Activated B cell treated with CpG ODN at 0.5 μM for 24 hours (primary cell): ENCODE measurements at regions of chr10 and their contacts with region 1.

Region 1: DNA sequence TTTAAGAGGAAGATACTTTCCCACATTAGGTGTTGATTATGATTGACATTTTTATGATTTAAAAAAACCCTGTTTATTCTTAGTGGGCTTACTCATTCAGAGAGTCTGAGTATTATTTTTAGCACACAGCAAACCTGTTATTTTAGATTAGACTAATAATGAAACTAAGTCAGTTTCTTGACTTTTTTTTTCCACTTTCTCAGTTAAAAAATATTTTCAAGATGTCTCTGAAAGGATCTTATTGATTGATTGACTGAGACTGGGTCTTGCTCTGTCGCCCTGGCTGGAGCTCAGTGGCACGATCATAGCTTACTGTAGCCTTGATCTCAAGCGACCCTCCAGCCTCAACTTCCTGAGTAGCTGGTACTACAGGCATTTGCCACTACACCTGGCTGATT is 20.4 kb upstream of the INPP5F start:
- DNase-seq: peak; percentile 31
- ATAC-seq: peak; percentile 25
- H3K4me3 Mint-ChIP-seq: peak overlapping the region; percentile 59
- H3K27ac Mint-ChIP-seq: peak overlapping the region; percentile 97
- H3K4me1 Mint-ChIP-seq: peaks cover 95% of the 10 kb centered on the region
- H3K27me3 Mint-ChIP-seq: no peaks in the 10 kb centered on the region
- CTCF ChIP-seq: no peak

Region 2: GRCh38 chr10:119604468-119604867 is 101.0 kb before region 1 on chr10:
- CTCF ChIA-PET with region 1: no interaction called
- POLR2A ChIA-PET with region 1: no interaction called
- intact Hi-C with region 1: no loop called
- DNase-seq: no peak
- ATAC-seq: no peak
- H3K4me3 Mint-ChIP-seq: no peak overlapping the region
- H3K27ac Mint-ChIP-seq: no peak overlapping the region
- H3K4me1 Mint-ChIP-seq: peaks cover 3% of the 10 kb centered on the region
- H3K27me3 Mint-ChIP-seq: peaks cover 2% of the 10 kb centered on the region
- CTCF ChIP-seq: no peak

Region 3: GRCh38 chr10:119650692-119651513 is 54.5 kb before region 1 on chr10 and contains the start of gene BAG3:
- CTCF ChIA-PET with region 1: no interaction called
- POLR2A ChIA-PET with region 1: interaction called, 3 read pairs
- intact Hi-C with region 1: loop called (anchors 2 kb)
- DNase-seq: peak; percentile 73
- ATAC-seq: peak; percentile 93
- H3K4me3 Mint-ChIP-seq: peak within 1 kb of the TSS; percentile 97
- H3K27ac Mint-ChIP-seq: peak within 1 kb of the TSS; percentile 95
- H3K4me1 Mint-ChIP-seq: peaks cover 16% of the 10 kb centered on the region
- H3K27me3 Mint-ChIP-seq: no peaks in the 10 kb centered on the region
- CTCF ChIP-seq: no peak
- total RNA-seq, gene BAG3: 4.3 and 4.7 TPM in 2 replicates

Region 4: DNA sequence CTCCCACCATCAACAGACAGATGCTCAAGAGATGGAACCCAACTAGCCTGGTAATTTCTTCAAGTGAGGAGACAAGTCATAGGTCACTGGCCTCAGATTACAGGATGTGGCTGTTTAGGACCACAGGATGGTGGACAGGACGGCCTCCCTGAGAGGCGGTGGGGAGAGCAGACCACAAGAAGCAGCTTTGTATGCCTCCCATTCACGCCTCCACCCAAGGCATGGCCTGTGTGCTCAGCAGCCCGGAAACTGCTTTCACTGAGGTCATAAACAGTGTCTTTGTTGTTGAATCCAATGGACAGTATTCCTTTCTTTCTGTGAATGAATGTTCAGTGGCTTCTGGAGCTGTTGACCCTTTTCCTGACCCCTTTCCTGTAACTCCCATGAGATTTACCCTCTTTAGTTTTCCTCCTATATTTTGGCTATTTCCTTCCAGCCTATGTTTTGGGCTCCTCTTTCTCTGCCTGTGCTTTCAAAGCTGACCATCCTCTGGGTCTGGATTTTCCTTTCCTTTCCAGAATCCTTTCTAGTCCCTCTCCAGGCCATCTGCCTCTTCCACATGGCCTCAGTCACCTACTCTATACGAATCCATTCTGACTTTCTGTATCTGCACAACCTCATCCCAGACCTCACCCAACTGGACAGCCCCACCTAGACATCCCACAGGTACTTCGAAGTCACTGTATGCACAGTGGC is 12.0 kb before region 1 on chr10:
- CTCF ChIA-PET with region 1: interaction called, 4 read pairs
- POLR2A ChIA-PET with region 1: interaction called, 18 read pairs
- intact Hi-C with region 1: no loop called
- DNase-seq: no peak
- ATAC-seq: no peak
- H3K4me3 Mint-ChIP-seq: no peak overlapping the region
- H3K27ac Mint-ChIP-seq: no peak overlapping the region
- H3K4me1 Mint-ChIP-seq: peaks cover 43% of the 10 kb centered on the region
- H3K27me3 Mint-ChIP-seq: no peaks in the 10 kb centered on the region
- CTCF ChIP-seq: no peak

Region 5: GRCh38 chr10:119725828-119726675 is 20.6 kb after region 1 on chr10 and contains the start of gene INPP5F:
- CTCF ChIA-PET with region 1: interaction called, 11 read pairs
- POLR2A ChIA-PET with region 1: interaction called, 236 read pairs
- intact Hi-C with region 1: loop called (anchors 1 kb)
- DNase-seq: peak; percentile 96
- ATAC-seq: peak; percentile 92
- H3K4me3 Mint-ChIP-seq: peak within 1 kb of the TSS; percentile 92
- H3K27ac Mint-ChIP-seq: peak within 1 kb of the TSS; percentile 81
- H3K4me1 Mint-ChIP-seq: peaks cover 57% of the 10 kb centered on the region
- H3K27me3 Mint-ChIP-seq: no peaks in the 10 kb centered on the region
- CTCF ChIP-seq: no peak
- total RNA-seq, gene INPP5F: 45.9 and 53.5 TPM in 2 replicates

Region 6: GRCh38 chr10:120480065-120480600 is 774.7 kb after region 1 on chr10:
- CTCF ChIA-PET with region 1: no interaction called
- POLR2A ChIA-PET with region 1: no interaction called
- intact Hi-C with region 1: no loop called
- DNase-seq: no peak
- ATAC-seq: no peak
- H3K4me3 Mint-ChIP-seq: no peak overlapping the region
- H3K27ac Mint-ChIP-seq: no peak overlapping the region
- H3K4me1 Mint-ChIP-seq: no peaks in the 10 kb centered on the region
- H3K27me3 Mint-ChIP-seq: peaks cover 4% of the 10 kb centered on the region
- CTCF ChIP-seq: no peak